Activated B cell treated with CpG ODN at 0.5 μM for 24 hours (primary cell): ENCODE measurements at regions of chr9 and their contacts with region 1.

Region 1: GRCh38 chr9:78115073-78115472 is 83.5 kb upstream of the GNAQ start:
- DNase-seq: no peak
- ATAC-seq: peak; percentile 56
- H3K4me3 Mint-ChIP-seq: no peak overlapping the region
- H3K27ac Mint-ChIP-seq: no peak overlapping the region
- H3K4me1 Mint-ChIP-seq: peaks cover 22% of the 10 kb centered on the region
- H3K27me3 Mint-ChIP-seq: peaks cover 34% of the 10 kb centered on the region
- CTCF ChIP-seq: no peak

Region 2: GRCh38 chr9:78213712-78214111 is 98.6 kb after region 1 on chr9:
- CTCF ChIA-PET with region 1: interaction called, 3 read pairs
- POLR2A ChIA-PET with region 1: no interaction called
- intact Hi-C with region 1: loop called (anchors 1 kb)
- DNase-seq: no peak
- ATAC-seq: no peak
- H3K4me3 Mint-ChIP-seq: no peak overlapping the region
- H3K27ac Mint-ChIP-seq: no peak overlapping the region
- H3K4me1 Mint-ChIP-seq: peaks cover 19% of the 10 kb centered on the region
- H3K27me3 Mint-ChIP-seq: no peaks in the 10 kb centered on the region
- CTCF ChIP-seq: no peak

Region 3: GRCh38 chr9:78351816-78352215 is 236.7 kb after region 1 on chr9:
- CTCF ChIA-PET with region 1: no interaction called
- POLR2A ChIA-PET with region 1: no interaction called
- intact Hi-C with region 1: no loop called
- DNase-seq: no peak
- ATAC-seq: no peak
- H3K4me3 Mint-ChIP-seq: no peak overlapping the region
- H3K27ac Mint-ChIP-seq: no peak overlapping the region
- H3K4me1 Mint-ChIP-seq: no peaks in the 10 kb centered on the region
- H3K27me3 Mint-ChIP-seq: no peaks in the 10 kb centered on the region
- CTCF ChIP-seq: no peak